H1 (cell line): ENCODE measurements at regions of chr1 and their contacts with region 1.

Region 1: DNA sequence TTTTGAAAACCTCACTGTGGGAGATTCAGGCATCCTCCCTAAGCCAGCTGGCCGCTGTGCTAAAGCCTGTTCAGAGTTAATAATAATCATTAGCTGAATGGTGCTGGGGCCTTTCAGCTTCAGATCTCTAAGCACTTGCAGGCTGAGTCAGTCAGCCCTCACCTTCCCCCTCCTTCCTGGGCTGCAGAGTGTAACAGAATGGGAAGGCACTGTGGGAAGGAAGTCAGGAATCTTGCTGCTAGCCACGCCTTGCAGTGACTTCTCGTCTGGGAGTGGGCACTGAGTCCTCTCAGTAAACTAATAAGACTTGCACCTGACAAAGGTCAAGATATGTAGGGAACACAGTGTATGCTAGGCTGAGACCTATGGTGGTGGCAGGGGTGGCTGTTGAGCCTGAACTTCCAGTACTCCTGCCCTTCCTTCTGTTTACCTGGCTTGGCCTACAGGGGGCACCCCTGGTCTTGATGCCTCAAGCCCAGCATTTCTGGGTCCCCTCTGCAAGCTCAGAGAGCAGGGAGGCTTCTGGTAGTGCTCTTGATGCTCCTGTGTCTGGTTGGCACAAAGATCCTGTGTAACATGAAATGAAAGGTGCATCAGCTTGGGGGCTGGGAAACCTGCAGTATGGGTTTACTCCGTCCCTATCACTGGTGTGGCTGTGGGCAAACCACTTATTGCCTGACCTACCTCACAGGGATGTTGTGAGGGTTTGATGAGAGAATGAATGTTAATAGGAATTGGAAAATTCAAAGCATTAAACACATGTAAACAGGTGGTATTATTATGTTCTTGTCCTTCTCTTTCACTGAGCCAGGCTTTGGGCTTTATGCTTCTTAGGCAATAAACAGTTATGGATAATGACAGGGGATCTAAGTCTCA is 6.0 kb downstream of the CYB561D1 start:
- DNase-seq: peak in 1 of 2 experiments; percentile 90
- H3K4me3 ChIP-seq: no peak overlapping the region
- H3K27ac ChIP-seq: no peak overlapping the region
- H3K4me1 ChIP-seq: peaks cover 0 to 11% (median 5%) of the 10 kb centered on the region in 4 experiments; a peak in 5 of 7 replicates
- H3K27me3 ChIP-seq: no peaks in the 10 kb centered on the region
- CTCF ChIP-seq: peak; percentile 82 to 87 (median 85)
- EP300 ChIP-seq: no peak
- POLR2A ChIP-seq: no peak
- RAD21 ChIP-seq: peak; percentile 58 to 67

Region 2: GRCh38 chr1:109193653-109194590 is 306.0 kb before region 1 on chr1:
- CTCF ChIA-PET with region 1: no interaction called
- POLR2A ChIA-PET with region 1: no interaction called
- DNase-seq: peak in 1 of 2 experiments; percentile 92
- H3K4me3 ChIP-seq: no peak overlapping the region
- H3K27ac ChIP-seq: no peak overlapping the region
- H3K4me1 ChIP-seq: peaks cover 0 to 2% (median 0%) of the 10 kb centered on the region in 4 experiments; a peak in 1 of 7 replicates
- H3K27me3 ChIP-seq: no peaks in the 10 kb centered on the region
- CTCF ChIP-seq: peak; percentile 79 to 87 (median 84)
- EP300 ChIP-seq: no peak
- POLR2A ChIP-seq: no peak
- RAD21 ChIP-seq: peak; percentile 74 to 84

Region 3: GRCh38 chr1:109474697-109475096 is 25.2 kb before region 1 on chr1:
- CTCF ChIA-PET with region 1: interaction called, 95 read pairs
- POLR2A ChIA-PET with region 1: interaction called, 3 read pairs
- DNase-seq: no peak
- H3K4me3 ChIP-seq: no peak overlapping the region
- H3K27ac ChIP-seq: no peak overlapping the region
- H3K4me1 ChIP-seq: no peaks in the 10 kb centered on the region
- H3K27me3 ChIP-seq: peaks cover 0 to 5% (median under 1%) of the 10 kb centered on the region in 4 experiments; a peak in 3 of 7 replicates
- CTCF ChIP-seq: no peak
- EP300 ChIP-seq: no peak
- POLR2A ChIP-seq: no peak
- RAD21 ChIP-seq: no peak

Region 4: DNA sequence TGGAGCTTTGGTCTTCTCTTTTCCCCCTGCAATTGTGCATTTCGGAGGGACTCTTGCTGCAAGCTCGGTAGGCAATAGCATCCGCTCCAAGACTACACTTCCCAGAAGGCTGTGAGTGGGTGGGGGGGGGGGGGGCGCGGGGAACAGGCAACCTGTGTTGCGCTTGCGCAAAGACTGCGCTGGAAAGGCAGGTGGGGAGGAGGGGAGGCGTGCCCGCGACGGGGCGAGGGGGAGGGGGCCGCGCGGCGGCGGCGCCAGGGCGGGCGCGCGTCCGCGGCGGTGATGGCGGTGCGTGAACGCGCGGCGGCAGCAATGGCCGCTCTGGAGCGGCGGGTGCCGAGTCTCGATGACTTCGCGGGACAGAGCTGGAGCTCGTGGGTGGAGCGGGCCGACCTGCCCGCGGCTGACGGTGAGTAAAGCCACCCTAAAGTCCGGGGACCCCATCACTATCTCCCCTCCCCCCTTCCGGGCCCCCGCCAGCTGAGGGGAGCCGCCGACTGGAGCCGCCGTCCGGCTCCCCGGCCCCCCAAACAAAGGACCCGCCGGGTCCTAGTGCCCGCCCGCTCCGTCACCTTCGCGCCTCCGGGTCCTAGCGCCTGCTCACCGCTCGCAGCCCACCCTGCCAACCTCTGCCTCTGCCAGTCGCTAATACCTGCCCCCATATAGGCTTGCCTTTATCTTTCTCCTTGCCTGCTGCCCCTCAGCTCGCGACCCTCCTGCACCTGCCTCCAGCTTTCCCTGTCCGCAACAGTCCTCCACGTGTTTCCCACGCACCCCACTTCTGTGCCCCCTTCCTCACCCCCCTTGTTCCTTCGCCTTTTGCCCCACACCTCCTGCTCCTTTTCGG is 16.0 kb before region 1 on chr1 and contains the start of gene ATXN7L2:
- CTCF ChIA-PET with region 1: interaction called, 666 read pairs
- POLR2A ChIA-PET with region 1: interaction called, 17 read pairs
- DNase-seq: peak in 1 of 2 experiments; percentile 91
- H3K4me3 ChIP-seq: peak within 1 kb of the TSS; percentile 63 to 97 (median 92)
- H3K27ac ChIP-seq: peak within 1 kb of the TSS; percentile 95
- H3K4me1 ChIP-seq: peaks cover 0 to 9% (median 2%) of the 10 kb centered on the region in 4 experiments; a peak in 3 of 7 replicates
- H3K27me3 ChIP-seq: peaks cover 0 to 5% (median 0%) of the 10 kb centered on the region in 4 experiments; a peak in 1 of 7 replicates
- CTCF ChIP-seq: no peak
- EP300 ChIP-seq: no peak
- POLR2A ChIP-seq: peak; percentile 87 to 92
- RAD21 ChIP-seq: no peak
- total RNA-seq, gene ATXN7L2: 9.3 and 9.8 TPM in 2 replicates

Region 5: GRCh38 chr1:109895720-109896504 is 396.0 kb after region 1 on chr1:
- CTCF ChIA-PET with region 1: no interaction called
- POLR2A ChIA-PET with region 1: no interaction called
- DNase-seq: no peak
- H3K4me3 ChIP-seq: no peak overlapping the region
- H3K27ac ChIP-seq: no peak overlapping the region
- H3K4me1 ChIP-seq: peaks cover 0 to 3% (median 0%) of the 10 kb centered on the region in 4 experiments; a peak in 2 of 7 replicates
- H3K27me3 ChIP-seq: no peaks in the 10 kb centered on the region; a peak in 1 of 7 replicates
- CTCF ChIP-seq: no peak
- EP300 ChIP-seq: no peak
- POLR2A ChIP-seq: no peak
- RAD21 ChIP-seq: no peak